ENCODE measurements at regions of chr11 and their contacts with region 1.

Region 1: GRCh38 chr11:108647701-108648527 is 17.0 kb upstream of the DDX10 start:
- DNase-seq: peak; percentile 71
- H3K4me3 ChIP-seq: no peak overlapping the region
- H3K27ac ChIP-seq: no peak overlapping the region
- H3K4me1 ChIP-seq: peaks cover 0 to 15% (median 7%) of the 10 kb centered on the region in 4 donors
- H3K27me3 ChIP-seq: no peaks in the 10 kb centered on the region
- CTCF ChIP-seq: peak; percentile 61 to 73 (median 67)
- EP300 ChIP-seq: no peak
- POLR2A ChIP-seq: no peak

Region 2: GRCh38 chr11:108393046-108393445 is 254.9 kb before region 1 on chr11:
- in situ Hi-C with region 1: no loop called
- intact Hi-C with region 1: no loop called
- DNase-seq: no peak
- H3K4me3 ChIP-seq: no peak overlapping the region
- H3K27ac ChIP-seq: no peak overlapping the region
- H3K4me1 ChIP-seq: no peaks in the 10 kb centered on the region
- H3K27me3 ChIP-seq: no peaks in the 10 kb centered on the region
- CTCF ChIP-seq: no peak
- EP300 ChIP-seq: no peak
- POLR2A ChIP-seq: no peak

Region 3: DNA sequence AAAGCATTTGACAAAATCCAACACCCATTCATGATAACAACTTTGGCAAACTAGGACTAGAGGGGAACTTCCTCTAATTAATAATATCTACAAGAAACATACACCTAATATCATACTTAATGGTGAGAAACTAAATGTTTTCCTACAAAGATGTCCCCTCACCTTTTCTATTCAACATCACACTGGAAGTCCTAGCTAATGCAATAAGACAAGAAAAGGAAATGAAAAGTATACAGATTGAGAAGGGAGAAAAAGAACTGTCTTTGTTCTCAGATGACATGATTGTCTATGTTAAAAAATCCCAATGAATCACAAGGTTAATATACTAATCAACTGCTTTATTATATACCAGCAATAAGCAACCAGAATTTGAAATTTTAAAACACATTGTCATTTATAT is 233.0 kb before region 1 on chr11:
- in situ Hi-C with region 1: loop called in 1 of 4 experiments (anchors 10 kb)
- intact Hi-C with region 1: loop called (anchors 5 kb)
- DNase-seq: no peak
- H3K4me3 ChIP-seq: no peak overlapping the region
- H3K27ac ChIP-seq: no peak overlapping the region
- H3K4me1 ChIP-seq: no peaks in the 10 kb centered on the region
- H3K27me3 ChIP-seq: no peaks in the 10 kb centered on the region
- CTCF ChIP-seq: no peak
- EP300 ChIP-seq: no peak
- POLR2A ChIP-seq: no peak

Measured in transverse colon (tissue), 4 donors.